ENCODE measurements at regions of chr17 and their contacts with region 1.

Region 1: DNA sequence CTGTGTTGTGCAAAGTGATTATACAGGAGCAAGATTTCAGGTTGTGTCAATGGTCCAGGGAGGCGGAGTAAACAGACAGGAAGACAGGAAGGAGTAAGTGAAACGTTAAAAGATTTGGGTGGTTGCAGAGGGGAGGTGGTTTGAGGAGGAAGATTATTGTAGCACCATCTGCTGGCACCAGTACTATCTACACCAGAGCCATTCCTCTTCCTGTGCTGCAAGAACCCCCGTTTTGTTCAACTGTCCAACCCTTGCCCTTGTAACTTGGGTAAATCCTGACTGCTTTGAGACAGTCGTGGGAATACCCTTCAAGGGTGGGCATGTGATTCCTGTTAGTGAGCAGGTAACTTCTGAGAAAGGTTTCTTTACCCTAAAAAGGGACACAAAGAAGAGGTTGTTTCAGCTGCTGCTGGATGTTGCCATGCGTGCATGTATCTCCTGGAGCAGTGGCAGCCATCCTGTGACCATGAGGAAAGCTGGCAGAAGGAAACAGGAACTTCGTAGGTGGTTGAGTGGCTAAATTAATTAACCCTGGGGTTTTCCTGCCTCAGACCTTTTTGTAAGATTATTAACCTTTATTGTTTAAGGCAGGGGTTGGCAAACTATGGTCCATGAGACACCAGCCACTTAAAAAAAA is 124.1 kb downstream of the PRKCA start:
- DNase-seq: peak; percentile 14 to 81 (median 49)
- ATAC-seq: peak; percentile 98
- H3K4me3 ChIP-seq: no peak overlapping the region
- H3K4me3 Mint-ChIP-seq: peak overlapping the region; percentile 48
- H3K27ac ChIP-seq: no peak overlapping the region
- H3K27ac Mint-ChIP-seq: peak overlapping the region; percentile 82
- H3K4me1 ChIP-seq: peaks cover 19% of the 10 kb centered on the region
- H3K4me1 Mint-ChIP-seq: peaks cover 64% of the 10 kb centered on the region
- H3K27me3 ChIP-seq: no peaks in the 10 kb centered on the region
- H3K27me3 Mint-ChIP-seq: no peaks in the 10 kb centered on the region
- CTCF ChIP-seq: peak; percentile 48

Region 2: DNA sequence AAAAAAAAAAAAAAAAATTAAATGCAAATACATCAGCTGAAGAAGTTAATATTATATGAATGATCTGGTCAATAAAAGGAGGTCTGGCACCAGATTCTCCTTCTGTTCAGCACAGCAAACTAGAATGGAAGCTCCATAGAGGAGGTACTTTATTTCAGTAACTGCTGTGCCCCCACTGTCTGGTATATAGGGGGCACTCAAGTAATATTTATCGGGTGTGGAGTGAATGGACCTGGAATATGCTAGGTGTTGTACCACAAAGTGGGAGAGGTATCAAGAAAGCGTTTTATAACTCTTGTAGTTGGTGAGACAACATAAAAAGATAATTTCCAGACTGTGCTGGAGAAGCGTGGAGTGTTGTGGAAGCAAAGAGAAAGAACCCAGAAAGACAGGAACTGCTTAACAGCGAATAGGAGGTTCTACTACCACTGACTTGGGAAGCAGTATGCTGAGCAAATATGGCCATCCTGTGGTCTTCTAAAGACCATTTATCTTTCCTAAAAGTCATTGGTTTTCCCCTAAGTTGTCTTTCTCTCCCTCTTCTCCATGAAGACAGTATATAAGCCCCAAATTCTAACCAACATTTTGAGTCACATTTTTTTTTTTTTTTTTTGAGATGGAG is 136.3 kb before region 1 on chr17:
- CTCF ChIA-PET with region 1: interaction called, 5 read pairs
- POLR2A ChIA-PET with region 1: no interaction called
- intact Hi-C with region 1: loop called in 1 of 2 experiments (anchors 1 kb)
- DNase-seq: peak in 2 of 9 experiments; percentile 24 to 51
- ATAC-seq: peak; percentile 48
- H3K4me3 ChIP-seq: no peak overlapping the region
- H3K4me3 Mint-ChIP-seq: no peak overlapping the region
- H3K27ac ChIP-seq: no peak overlapping the region
- H3K27ac Mint-ChIP-seq: no peak overlapping the region
- H3K4me1 ChIP-seq: peaks cover 24% of the 10 kb centered on the region
- H3K4me1 Mint-ChIP-seq: peaks cover 36% of the 10 kb centered on the region
- H3K27me3 ChIP-seq: no peaks in the 10 kb centered on the region
- H3K27me3 Mint-ChIP-seq: no peaks in the 10 kb centered on the region
- CTCF ChIP-seq: no peak

Region 3: DNA sequence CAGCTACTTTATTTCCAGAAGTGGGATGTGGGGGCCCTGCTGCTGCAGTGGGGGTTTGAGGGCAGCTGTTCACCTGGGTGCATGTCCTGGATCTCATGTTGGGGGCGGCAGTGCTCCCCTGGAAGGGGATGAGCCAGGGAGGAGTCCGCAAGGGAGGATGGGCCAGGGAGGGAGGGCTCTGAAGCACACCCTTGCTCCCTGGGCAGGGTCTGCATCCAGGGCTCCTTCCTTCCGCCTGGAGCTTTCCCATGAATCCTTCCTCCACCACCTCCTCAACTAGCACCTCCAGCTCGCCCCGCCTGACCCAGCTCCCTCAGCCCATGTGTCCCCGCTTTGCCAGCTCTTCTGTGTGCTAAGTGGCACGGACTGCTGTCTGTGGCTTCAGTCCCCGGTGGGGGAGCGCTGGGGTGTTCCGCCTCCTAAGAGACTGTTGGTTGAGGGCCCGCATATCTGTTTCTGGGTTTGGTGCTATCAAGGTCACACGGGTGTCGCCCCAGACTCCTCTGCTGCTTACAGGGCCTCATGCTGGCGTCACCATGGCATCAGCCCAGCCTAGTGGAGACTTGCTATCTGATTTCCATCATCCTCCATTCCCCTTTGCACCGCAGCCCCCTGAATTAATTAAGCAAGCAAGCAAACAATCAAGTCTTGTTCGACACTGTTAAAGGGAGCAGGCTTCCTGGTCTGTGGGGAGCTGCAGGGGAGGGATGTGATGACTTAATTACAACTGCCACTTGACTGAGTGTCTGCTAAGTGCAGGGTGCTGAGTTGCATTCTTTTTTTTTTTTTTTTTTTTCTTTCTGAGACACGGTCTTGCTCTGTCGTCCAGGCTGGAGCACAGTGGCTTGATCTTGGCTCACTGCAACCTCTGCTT is 52.3 kb before region 1 on chr17:
- CTCF ChIA-PET with region 1: no interaction called
- POLR2A ChIA-PET with region 1: no interaction called
- intact Hi-C with region 1: loop called in 1 of 2 experiments (anchors 5 kb)
- DNase-seq: peak; percentile 46 to 85 (median 73)
- ATAC-seq: peak; percentile 90
- H3K4me3 ChIP-seq: no peak overlapping the region
- H3K4me3 Mint-ChIP-seq: peak overlapping the region; percentile 51
- H3K27ac ChIP-seq: peak overlapping the region; percentile 19 to 41
- H3K27ac Mint-ChIP-seq: peak overlapping the region; percentile 91
- H3K4me1 ChIP-seq: peaks cover 31% of the 10 kb centered on the region
- H3K4me1 Mint-ChIP-seq: peaks cover 62% of the 10 kb centered on the region
- H3K27me3 ChIP-seq: no peaks in the 10 kb centered on the region
- H3K27me3 Mint-ChIP-seq: no peaks in the 10 kb centered on the region
- CTCF ChIP-seq: no peak

Region 4: GRCh38 chr17:66673668-66674315 is 247.3 kb after region 1 on chr17:
- CTCF ChIA-PET with region 1: no interaction called
- POLR2A ChIA-PET with region 1: no interaction called
- intact Hi-C with region 1: loop called in 1 of 2 experiments (anchors 5 kb)
- DNase-seq: peak; percentile 6 to 87 (median 57)
- ATAC-seq: peak; percentile 86
- H3K4me3 ChIP-seq: no peak overlapping the region
- H3K4me3 Mint-ChIP-seq: peak overlapping the region; percentile 23
- H3K27ac ChIP-seq: peak overlapping the region in 1 of 2 experiments; percentile 45
- H3K27ac Mint-ChIP-seq: peak overlapping the region; percentile 91
- H3K4me1 ChIP-seq: peaks cover 23% of the 10 kb centered on the region
- H3K4me1 Mint-ChIP-seq: peaks cover 56% of the 10 kb centered on the region
- H3K27me3 ChIP-seq: no peaks in the 10 kb centered on the region
- H3K27me3 Mint-ChIP-seq: no peaks in the 10 kb centered on the region
- CTCF ChIP-seq: peak; percentile 56

Measured in CD8-positive, alpha-beta T cell (primary cell).